ENCODE measurements at regions of chr17 and their contacts with region 1.

Region 1: GRCh38 chr17:76278952-76279741 is 14.0 kb downstream of the UBALD2 start:
- DNase-seq: peak; percentile 78 to 84 (median 79)
- H3K4me3 ChIP-seq: no peak overlapping the region
- H3K4me3 Mint-ChIP-seq: no peak overlapping the region
- H3K27ac ChIP-seq: no peak overlapping the region
- H3K27ac Mint-ChIP-seq: peak overlapping the region in 3 of 7 donors; percentile 25 to 77 (median 59)
- H3K4me1 ChIP-seq: peaks cover 17% of the 10 kb centered on the region
- H3K4me1 Mint-ChIP-seq: peaks cover 7 to 28% (median 10%) of the 10 kb centered on the region in 4 donors
- H3K27me3 ChIP-seq: no peaks in the 10 kb centered on the region
- H3K27me3 Mint-ChIP-seq: no peaks in the 10 kb centered on the region

Region 2: GRCh38 chr17:75614006-75614405 is 665.1 kb before region 1 on chr17:
- CTCF ChIA-PET with region 1: no interaction called
- POLR2A ChIA-PET with region 1: no interaction called
- intact Hi-C with region 1: no loop called
- DNase-seq: no peak
- H3K4me3 ChIP-seq: no peak overlapping the region
- H3K4me3 Mint-ChIP-seq: no peak overlapping the region
- H3K27ac ChIP-seq: no peak overlapping the region
- H3K27ac Mint-ChIP-seq: no peak overlapping the region
- H3K4me1 ChIP-seq: no peaks in the 10 kb centered on the region
- H3K4me1 Mint-ChIP-seq: no peaks in the 10 kb centered on the region
- H3K27me3 ChIP-seq: no peaks in the 10 kb centered on the region
- H3K27me3 Mint-ChIP-seq: no peaks in the 10 kb centered on the region

Region 3: GRCh38 chr17:76091526-76092285 is 187.4 kb before region 1 on chr17:
- CTCF ChIA-PET with region 1: interaction called, 15 read pairs
- POLR2A ChIA-PET with region 1: no interaction called
- intact Hi-C with region 1: no loop called
- DNase-seq: peak in 1 of 5 donors; percentile 20
- H3K4me3 ChIP-seq: no peak overlapping the region
- H3K4me3 Mint-ChIP-seq: peak overlapping the region in 5 of 8 donors; percentile 44 to 65 (median 57)
- H3K27ac ChIP-seq: no peak overlapping the region
- H3K27ac Mint-ChIP-seq: peak overlapping the region in 5 of 7 donors; percentile 36 to 92 (median 79)
- H3K4me1 ChIP-seq: no peaks in the 10 kb centered on the region
- H3K4me1 Mint-ChIP-seq: peaks cover 1 to 15% (median 3%) of the 10 kb centered on the region in 4 donors
- H3K27me3 ChIP-seq: no peaks in the 10 kb centered on the region
- H3K27me3 Mint-ChIP-seq: no peaks in the 10 kb centered on the region

Region 4: DNA sequence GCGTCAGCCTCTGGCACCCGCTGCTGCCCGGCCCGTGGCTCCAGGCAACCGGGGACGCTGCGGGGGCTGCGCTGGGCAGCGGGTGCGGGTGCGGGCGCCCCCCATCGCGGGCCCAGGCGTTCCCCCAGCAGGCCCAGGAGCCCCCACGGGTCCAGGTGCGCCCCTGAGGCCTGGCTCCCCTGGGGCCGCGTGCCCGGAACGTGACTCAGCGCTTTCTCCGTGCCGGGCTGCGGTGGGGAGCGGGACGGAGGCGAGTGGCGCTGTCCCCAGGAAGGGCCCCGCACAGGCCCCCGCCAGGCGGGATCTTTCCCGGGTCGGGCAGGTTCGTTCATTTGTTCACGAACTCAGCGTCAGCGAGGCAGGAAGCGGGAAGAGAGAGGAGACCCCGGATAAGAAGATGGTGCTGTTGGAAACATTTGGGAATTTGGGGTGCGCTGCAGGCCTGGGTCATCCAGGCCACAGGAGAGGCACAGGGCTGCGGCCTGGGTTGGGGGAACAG is 157.2 kb before region 1 on chr17:
- CTCF ChIA-PET with region 1: interaction called, 232 read pairs
- POLR2A ChIA-PET with region 1: interaction called, 108 read pairs
- intact Hi-C with region 1: loop called (anchors 1 kb)
- DNase-seq: no peak
- H3K4me3 ChIP-seq: peak overlapping the region in 1 of 2 donors; percentile 60
- H3K4me3 Mint-ChIP-seq: peak overlapping the region in 4 of 8 donors; percentile 21 to 49 (median 37)
- H3K27ac ChIP-seq: peak overlapping the region; percentile 29
- H3K27ac Mint-ChIP-seq: peak overlapping the region in 6 of 7 donors; percentile 21 to 86 (median 65)
- H3K4me1 ChIP-seq: peaks cover 10% of the 10 kb centered on the region
- H3K4me1 Mint-ChIP-seq: peaks cover 4 to 12% (median 8%) of the 10 kb centered on the region in 4 donors
- H3K27me3 ChIP-seq: no peaks in the 10 kb centered on the region
- H3K27me3 Mint-ChIP-seq: no peaks in the 10 kb centered on the region

Region 5: DNA sequence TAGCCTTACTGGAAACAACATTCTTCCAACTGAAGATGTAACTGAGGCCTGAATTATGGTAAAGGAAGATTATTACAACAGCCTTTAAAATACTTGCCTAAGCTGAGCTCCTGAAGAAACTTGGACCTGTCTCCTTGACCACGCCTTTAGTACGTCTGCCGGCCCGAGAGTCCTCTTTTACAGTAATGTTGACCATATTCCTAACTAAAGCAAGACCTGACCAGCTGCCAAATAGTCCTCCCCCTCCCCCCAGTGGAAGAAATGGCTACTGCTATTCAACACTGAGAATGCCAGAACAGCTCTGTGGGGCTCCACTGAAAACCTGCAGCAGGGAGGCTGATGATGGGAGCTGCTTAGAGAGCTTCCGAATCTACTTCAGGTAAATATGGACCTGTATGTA is 125.5 kb before region 1 on chr17:
- CTCF ChIA-PET with region 1: interaction called, 30 read pairs
- POLR2A ChIA-PET with region 1: interaction called, 6 read pairs
- intact Hi-C with region 1: no loop called
- DNase-seq: no peak
- H3K4me3 ChIP-seq: no peak overlapping the region
- H3K4me3 Mint-ChIP-seq: no peak overlapping the region
- H3K27ac ChIP-seq: no peak overlapping the region
- H3K27ac Mint-ChIP-seq: peak overlapping the region in 6 of 7 donors; percentile 22 to 79 (median 65)
- H3K4me1 ChIP-seq: peaks cover 24% of the 10 kb centered on the region
- H3K4me1 Mint-ChIP-seq: peaks cover 29 to 49% (median 35%) of the 10 kb centered on the region in 4 donors
- H3K27me3 ChIP-seq: no peaks in the 10 kb centered on the region
- H3K27me3 Mint-ChIP-seq: no peaks in the 10 kb centered on the region

Region 6: DNA sequence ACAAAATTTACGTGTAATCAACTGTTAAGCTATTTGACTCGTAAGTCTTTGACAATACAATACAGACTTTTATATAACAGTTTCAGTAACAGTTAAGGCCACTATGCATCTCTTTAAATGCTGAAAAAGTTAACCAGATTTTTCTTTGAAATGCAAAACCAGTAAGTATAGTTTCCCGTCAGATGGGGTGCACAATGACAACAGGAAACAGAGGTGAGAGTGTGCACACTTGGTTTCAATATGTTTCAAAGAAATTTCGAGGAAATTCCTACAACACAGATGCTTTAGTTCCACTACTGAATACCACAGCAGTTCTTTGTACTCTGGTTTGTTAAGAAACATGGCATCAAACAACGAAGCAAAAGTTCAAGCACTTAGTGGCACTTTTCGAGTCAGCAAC is 87.3 kb before region 1 on chr17:
- CTCF ChIA-PET with region 1: interaction called, 34 read pairs
- POLR2A ChIA-PET with region 1: interaction called, 603 read pairs
- intact Hi-C with region 1: no loop called
- DNase-seq: peak; percentile 80 to 90 (median 86)
- H3K4me3 ChIP-seq: peak overlapping the region in 1 of 2 donors; percentile 19
- H3K4me3 Mint-ChIP-seq: peak overlapping the region; percentile 33 to 87 (median 80)
- H3K27ac ChIP-seq: peak overlapping the region; percentile 66
- H3K27ac Mint-ChIP-seq: peak overlapping the region; percentile 94 to 98 (median 95)
- H3K4me1 ChIP-seq: peaks cover 98% of the 10 kb centered on the region
- H3K4me1 Mint-ChIP-seq: peaks cover 58 to 87% (median 75%) of the 10 kb centered on the region in 4 donors
- H3K27me3 ChIP-seq: no peaks in the 10 kb centered on the region
- H3K27me3 Mint-ChIP-seq: no peaks in the 10 kb centered on the region

Region 7: DNA sequence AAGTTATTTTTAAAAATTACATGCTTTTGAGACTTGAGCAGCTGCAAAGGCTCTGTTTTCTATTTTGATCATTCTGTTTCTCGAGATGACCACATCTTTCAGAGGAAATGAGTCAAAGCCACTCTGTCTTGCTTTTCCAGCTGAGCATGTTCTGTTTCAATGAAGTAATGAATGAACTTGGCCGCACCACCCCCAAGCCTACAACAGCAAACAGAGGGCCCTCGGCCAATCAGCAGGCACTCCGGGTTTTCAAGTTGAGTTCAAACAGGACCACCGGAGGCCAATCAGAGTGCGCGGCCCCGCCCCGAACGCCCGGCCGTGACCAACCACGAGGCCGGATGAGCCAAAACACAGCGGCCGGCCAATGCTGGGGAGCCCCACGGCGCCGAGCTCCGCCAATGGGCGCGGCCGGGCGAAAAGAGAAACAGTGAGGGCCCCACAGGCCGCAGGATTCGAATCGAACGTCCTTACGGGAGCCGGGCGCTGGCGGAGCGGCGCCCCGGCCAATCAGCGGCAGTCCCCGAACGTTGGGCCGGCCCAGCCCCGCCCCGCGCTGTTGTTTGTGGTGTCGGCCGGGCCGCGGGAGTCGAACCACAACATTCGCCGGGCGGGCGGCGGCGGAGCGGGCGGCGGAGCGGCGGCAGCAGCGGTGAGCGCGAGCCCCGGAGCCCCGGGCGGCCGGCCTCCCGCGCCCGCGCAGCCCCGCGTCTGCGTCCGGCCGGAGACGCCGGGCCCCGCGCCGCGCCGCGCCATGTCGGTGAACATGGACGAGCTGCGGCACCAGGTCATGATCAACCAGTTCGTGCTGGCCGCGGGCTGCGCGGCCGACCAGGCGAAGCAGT is 14.2 kb before region 1 on chr17 and contains the start of gene UBALD2:
- CTCF ChIA-PET with region 1: interaction called, 46 read pairs
- POLR2A ChIA-PET with region 1: interaction called, 40 read pairs
- intact Hi-C with region 1: no loop called
- DNase-seq: peak; percentile 99
- H3K4me3 ChIP-seq: peak within 1 kb of the TSS; percentile 94 to 100
- H3K4me3 Mint-ChIP-seq: peak within 1 kb of the TSS; percentile 89 to 95 (median 92)
- H3K27ac ChIP-seq: peak within 1 kb of the TSS; percentile 82
- H3K27ac Mint-ChIP-seq: peak within 1 kb of the TSS; percentile 93 to 98 (median 96)
- H3K4me1 ChIP-seq: peaks cover 57% of the 10 kb centered on the region
- H3K4me1 Mint-ChIP-seq: peaks cover 33 to 69% (median 52%) of the 10 kb centered on the region in 4 donors
- H3K27me3 ChIP-seq: no peaks in the 10 kb centered on the region
- H3K27me3 Mint-ChIP-seq: no peaks in the 10 kb centered on the region
- total RNA-seq, gene UBALD2: 101 to 103 TPM